Cardiac septum (tissue), 1 donor: ENCODE measurements at regions of chr12 and their contacts with region 1.

Region 1: GRCh38 chr12:71746983-71747611 is 7.6 kb upstream of the RAB21 start:
- DNase-seq: no peak

Region 2: GRCh38 chr12:71415336-71416231 is 331.5 kb before region 1 on chr12:
- intact Hi-C with region 1: loop called (anchors 2 kb)
- DNase-seq: no peak

Region 3: DNA sequence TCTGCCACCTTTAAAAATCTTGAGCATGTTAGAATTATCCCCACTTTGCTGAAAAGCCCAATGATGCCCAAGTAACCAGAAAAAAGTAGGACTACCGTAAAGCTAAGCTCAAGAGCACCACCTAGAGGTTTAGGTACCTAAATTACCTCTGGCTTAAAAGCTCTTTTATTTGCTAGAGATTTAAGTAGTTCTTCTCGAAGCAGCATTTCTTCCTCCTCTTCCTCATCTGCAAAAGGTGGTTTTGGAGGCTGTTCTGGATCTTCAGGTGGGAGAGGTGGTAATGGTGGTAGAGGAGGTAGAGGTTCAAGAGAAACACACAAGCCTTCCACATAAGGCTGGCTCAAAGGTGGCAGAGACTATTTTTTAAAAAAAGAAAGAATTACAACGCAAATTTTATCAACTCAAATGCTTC is 110.4 kb before region 1 on chr12:
- intact Hi-C with region 1: loop called (anchors 5 kb)
- DNase-seq: no peak